ENCODE measurements at regions of chr1 and their contacts with region 1.

Region 1: DNA sequence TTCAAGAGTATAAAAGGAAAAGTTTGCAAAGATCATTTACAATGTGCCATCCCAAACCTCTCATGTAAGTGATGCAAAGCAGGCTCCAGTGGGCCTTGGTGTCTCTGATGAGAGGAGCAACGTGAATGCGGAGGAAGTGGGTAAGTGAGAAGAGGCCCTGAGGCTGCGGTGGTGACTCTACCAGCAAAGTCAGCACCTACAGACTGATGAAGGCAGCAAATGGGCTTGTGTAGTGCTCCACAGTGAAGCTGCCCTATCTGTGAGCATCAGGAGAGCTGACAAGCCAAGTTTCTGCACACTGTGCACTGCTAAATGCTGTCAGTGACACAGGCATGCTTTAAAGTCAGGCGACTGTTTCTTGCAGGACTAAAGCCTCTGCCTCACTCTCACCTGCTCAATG is 15.6 kb upstream of the RAP1A start:
- DNase-seq: no peak
- ATAC-seq: peak; percentile 65
- H3K4me3 Mint-ChIP-seq: peak overlapping the region; percentile 58
- H3K27ac Mint-ChIP-seq: peak overlapping the region; percentile 81
- H3K4me1 Mint-ChIP-seq: peaks cover 67% of the 10 kb centered on the region
- H3K27me3 Mint-ChIP-seq: no peaks in the 10 kb centered on the region
- CTCF ChIP-seq: no peak

Region 2: GRCh38 chr1:110513511-110513910 is 1090.5 kb before region 1 on chr1:
- CTCF ChIA-PET with region 1: no interaction called
- POLR2A ChIA-PET with region 1: no interaction called
- intact Hi-C with region 1: no loop called
- DNase-seq: no peak
- ATAC-seq: no peak
- H3K4me3 Mint-ChIP-seq: no peak overlapping the region
- H3K27ac Mint-ChIP-seq: no peak overlapping the region
- H3K4me1 Mint-ChIP-seq: no peaks in the 10 kb centered on the region
- H3K27me3 Mint-ChIP-seq: no peaks in the 10 kb centered on the region
- CTCF ChIP-seq: no peak

Region 3: GRCh38 chr1:111582644-111583618 is 21.0 kb before region 1 on chr1:
- CTCF ChIA-PET with region 1: no interaction called
- POLR2A ChIA-PET with region 1: interaction called, 8 read pairs
- intact Hi-C with region 1: loop called (anchors 2 kb)
- DNase-seq: no peak
- ATAC-seq: no peak
- H3K4me3 Mint-ChIP-seq: no peak overlapping the region
- H3K27ac Mint-ChIP-seq: no peak overlapping the region
- H3K4me1 Mint-ChIP-seq: peaks cover 8% of the 10 kb centered on the region
- H3K27me3 Mint-ChIP-seq: no peaks in the 10 kb centered on the region
- CTCF ChIP-seq: no peak

Region 4: DNA sequence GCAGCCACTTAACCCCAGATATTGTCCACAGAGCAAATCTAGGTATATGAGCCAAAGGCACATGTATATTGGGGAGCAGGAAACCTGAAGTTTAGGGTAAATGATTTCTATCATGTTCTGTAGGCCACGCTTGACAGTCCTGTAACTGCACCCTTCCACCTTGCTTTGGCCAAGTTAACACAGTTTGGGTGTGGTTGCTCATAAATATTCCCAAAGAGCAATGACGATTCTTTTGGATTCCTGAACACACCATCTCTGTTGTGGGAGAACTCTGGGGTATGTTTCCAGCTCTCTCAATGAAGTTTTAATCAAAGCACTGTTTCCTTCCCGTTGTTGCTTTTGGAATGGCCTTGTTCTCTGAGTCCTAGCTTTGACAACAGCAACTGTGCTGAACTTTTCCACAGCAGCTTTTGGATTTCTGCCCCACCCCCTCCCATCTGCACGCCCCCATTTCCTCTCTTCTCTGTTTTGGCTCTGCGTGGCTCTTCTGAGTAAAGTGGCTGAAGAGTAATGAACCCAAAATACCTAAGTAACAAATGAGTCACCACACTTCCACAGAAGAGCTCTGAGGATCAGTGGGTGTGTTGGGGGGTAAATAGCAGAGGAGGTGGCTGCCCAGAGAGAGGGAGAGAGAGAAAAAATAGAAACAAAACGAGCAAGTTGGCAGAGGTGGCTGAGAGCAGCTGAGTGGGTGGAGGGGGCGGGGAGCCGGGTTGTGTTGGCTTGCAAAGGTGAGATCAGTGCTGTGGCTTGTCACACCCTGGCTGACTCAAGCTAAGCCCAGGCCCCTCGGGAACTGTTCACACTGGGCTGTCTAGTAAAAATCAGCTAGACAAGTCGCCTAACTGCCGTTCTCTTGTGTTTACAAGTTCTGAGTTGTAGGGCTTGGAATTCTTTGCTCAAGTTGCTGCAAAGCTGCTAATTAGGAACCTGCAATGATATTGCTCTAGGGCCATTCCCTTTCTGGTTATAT is 11.3 kb before region 1 on chr1:
- CTCF ChIA-PET with region 1: interaction called, 8 read pairs
- POLR2A ChIA-PET with region 1: interaction called, 37 read pairs
- intact Hi-C with region 1: loop called (anchors 1 kb)
- DNase-seq: peak; percentile 58
- ATAC-seq: peak; percentile 93
- H3K4me3 Mint-ChIP-seq: peak overlapping the region; percentile 64
- H3K27ac Mint-ChIP-seq: peak overlapping the region; percentile 90
- H3K4me1 Mint-ChIP-seq: peaks cover 55% of the 10 kb centered on the region
- H3K27me3 Mint-ChIP-seq: no peaks in the 10 kb centered on the region
- CTCF ChIP-seq: no peak

Region 5: DNA sequence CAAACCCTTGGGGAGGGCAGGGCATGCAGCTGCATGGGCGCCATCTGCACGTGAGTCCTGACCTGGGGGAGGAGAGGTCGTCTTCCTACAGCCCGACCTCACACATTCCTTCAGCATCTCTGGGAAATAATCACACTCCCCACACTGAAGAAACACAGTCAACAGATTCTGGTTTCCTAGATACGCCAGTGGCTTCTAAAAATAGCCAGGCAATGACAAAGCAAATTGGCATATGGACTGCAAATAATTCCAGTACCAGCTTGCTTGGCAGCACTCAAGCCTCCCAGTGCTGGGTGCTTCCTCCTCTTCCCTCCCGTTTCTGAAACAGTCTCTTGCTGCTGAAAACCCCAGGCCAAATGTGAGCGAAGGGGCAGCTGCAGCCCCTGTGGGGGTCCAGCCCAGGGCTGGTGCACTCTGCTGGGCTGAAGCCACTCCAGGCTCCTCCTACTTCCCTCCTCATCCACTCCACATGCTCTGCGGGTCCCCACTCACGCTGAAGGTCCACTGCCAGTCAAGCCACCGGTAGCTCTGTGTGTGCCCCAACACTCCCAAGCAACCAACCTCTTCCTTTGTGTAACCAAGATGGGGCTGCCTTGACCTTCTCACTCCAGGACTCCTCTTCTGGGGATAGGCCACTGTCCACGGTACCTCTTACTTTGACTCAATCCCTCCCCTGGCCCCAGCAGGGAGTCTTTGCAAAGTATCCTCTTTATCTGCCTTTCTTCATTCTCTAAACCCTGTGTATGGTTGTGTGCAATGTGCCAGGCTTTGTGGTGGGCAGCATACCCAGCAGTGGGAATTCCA is 316.4 kb after region 1 on chr1:
- CTCF ChIA-PET with region 1: no interaction called
- POLR2A ChIA-PET with region 1: no interaction called
- intact Hi-C with region 1: no loop called
- DNase-seq: no peak
- ATAC-seq: no peak
- H3K4me3 Mint-ChIP-seq: no peak overlapping the region
- H3K27ac Mint-ChIP-seq: no peak overlapping the region
- H3K4me1 Mint-ChIP-seq: no peaks in the 10 kb centered on the region
- H3K27me3 Mint-ChIP-seq: peaks cover 22% of the 10 kb centered on the region
- CTCF ChIP-seq: no peak